T-cell (primary cell): ENCODE measurements at regions of chrX and their contacts with region 1.

Region 1: DNA sequence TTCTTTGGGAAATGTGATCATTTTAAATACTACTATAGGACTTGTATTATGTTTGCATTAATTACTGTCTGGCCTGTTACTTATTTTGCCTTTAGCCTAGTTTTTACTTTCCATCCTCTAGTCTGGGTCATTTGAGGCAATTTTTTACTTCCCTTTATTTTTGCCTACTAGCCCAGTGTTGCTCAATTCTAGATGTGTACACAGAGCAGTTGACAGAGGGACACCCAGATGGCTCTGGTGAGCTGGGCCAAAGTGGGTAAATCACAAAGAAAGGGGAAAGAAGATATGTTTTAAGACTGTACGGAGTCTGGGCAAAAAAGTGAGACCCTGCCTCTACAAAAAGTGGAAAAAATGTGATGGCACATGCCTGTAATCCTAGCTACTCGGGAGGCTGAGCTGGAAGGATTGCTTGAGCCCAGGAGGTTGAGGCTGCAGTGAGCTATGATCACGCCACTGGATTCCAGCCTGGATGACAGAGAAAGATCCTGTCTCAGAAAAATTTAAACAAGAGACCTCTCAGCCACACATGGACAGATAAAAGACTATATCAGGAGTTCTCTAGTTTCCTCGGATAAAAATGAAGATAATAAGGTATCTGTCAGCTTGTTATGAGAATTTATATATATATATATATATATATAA is 35.7 kb downstream of the APOO start:
- DNase-seq: no peak
- ATAC-seq: no peak
- H3K4me3 ChIP-seq: no peak overlapping the region
- H3K4me3 Mint-ChIP-seq: no peak overlapping the region
- H3K27ac ChIP-seq: no peak overlapping the region
- H3K27ac Mint-ChIP-seq: no peak overlapping the region
- H3K4me1 ChIP-seq: no peaks in the 10 kb centered on the region
- H3K4me1 Mint-ChIP-seq: no peaks in the 10 kb centered on the region
- H3K27me3 ChIP-seq: no peaks in the 10 kb centered on the region
- H3K27me3 Mint-ChIP-seq: no peaks in the 10 kb centered on the region

Region 2: DNA sequence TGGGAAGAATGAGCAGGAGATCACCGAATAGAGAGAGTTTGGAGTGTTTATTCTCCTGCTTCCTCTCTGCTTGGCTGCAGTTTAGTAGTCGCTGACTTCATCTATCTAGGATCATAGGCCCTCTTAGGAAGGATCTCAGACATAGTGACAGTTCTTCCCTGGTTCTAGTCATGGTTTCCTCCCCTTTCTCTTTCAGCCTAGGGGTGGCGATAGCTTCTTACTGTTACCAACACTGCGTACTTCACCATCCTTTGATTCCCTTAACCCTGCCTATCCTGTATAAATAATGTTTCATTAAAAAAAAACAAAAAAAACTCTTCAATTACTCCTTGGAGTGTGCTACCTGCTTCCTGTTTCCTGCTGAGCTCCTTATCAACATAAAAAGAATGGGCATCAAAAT is 768.5 kb before region 1 on chrX:
- CTCF ChIA-PET with region 1: no interaction called
- POLR2A ChIA-PET with region 1: no interaction called
- DNase-seq: no peak
- ATAC-seq: no peak
- H3K4me3 ChIP-seq: no peak overlapping the region
- H3K4me3 Mint-ChIP-seq: no peak overlapping the region
- H3K27ac ChIP-seq: no peak overlapping the region
- H3K27ac Mint-ChIP-seq: no peak overlapping the region
- H3K4me1 ChIP-seq: no peaks in the 10 kb centered on the region
- H3K4me1 Mint-ChIP-seq: no peaks in the 10 kb centered on the region
- H3K27me3 ChIP-seq: no peaks in the 10 kb centered on the region
- H3K27me3 Mint-ChIP-seq: no peaks in the 10 kb centered on the region

Region 3: DNA sequence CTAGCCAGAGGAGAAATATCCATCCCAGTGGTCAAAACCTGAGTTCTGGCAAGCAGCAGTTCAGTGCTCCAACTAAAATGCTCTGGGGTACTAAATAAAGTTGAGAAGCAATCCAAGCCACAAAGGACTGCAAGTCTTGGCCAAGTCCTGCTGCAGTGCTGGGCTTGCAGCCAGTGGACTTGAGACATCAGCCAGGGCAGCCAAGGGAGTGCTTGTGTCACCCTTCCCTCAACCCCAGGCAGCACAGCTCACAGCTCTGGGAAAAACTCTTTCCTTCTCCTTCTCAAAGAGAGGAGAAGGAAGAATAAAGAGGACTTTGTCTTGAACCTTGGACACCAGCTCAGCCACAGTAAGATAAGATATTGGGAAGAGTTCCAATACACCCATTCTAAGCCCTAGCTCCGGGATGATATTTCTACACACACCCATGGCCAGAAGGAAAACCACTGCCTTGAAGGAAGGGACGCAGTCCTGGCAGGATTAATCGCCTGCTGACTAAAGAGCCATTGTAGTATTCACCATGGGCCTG is 437.6 kb before region 1 on chrX:
- CTCF ChIA-PET with region 1: interaction called in 1 of 2 experiments, 12 read pairs
- POLR2A ChIA-PET with region 1: no interaction called
- DNase-seq: no peak
- ATAC-seq: no peak
- H3K4me3 ChIP-seq: no peak overlapping the region
- H3K4me3 Mint-ChIP-seq: no peak overlapping the region
- H3K27ac ChIP-seq: no peak overlapping the region
- H3K27ac Mint-ChIP-seq: no peak overlapping the region
- H3K4me1 ChIP-seq: no peaks in the 10 kb centered on the region
- H3K4me1 Mint-ChIP-seq: no peaks in the 10 kb centered on the region
- H3K27me3 ChIP-seq: no peaks in the 10 kb centered on the region
- H3K27me3 Mint-ChIP-seq: peaks cover 1 to 17% of the 10 kb centered on the region in 2 donors

Region 4: DNA sequence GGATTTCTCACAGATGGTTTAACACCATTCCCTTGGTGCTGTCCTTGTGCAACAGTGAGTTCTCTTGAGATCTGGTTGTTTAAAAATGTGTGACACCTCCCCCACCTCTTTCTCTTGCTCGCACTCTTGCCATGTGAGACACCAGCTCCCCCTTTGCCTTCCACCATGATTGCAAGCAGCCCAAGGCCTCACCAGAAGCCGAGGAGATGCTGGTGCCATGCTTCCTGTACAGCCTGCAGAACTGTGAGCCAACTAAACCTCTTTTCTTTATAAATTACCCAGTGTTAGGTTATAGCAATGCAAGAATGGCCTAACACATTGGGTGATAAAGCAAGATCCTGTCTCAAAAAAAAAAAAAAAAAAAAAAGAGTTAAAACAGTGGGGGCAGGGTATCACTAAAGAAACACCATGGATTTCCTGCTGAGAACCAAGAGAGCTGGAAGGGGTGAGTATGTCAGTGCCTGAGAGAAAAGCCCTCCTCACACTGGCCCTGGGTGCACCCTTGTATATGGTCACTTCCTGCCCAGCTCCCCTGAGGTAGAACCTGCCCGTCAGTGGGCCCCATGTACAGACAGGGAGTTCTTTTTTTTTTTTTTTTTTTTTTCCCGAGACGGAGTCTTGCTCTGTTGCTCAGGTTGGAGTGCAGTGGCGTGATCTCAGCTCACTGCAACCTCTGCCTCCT is 10.7 kb before region 1 on chrX:
- CTCF ChIA-PET with region 1: no interaction called
- POLR2A ChIA-PET with region 1: no interaction called
- DNase-seq: peak in 1 of 35 experiments; percentile 4
- ATAC-seq: no peak
- H3K4me3 ChIP-seq: no peak overlapping the region
- H3K4me3 Mint-ChIP-seq: no peak overlapping the region
- H3K27ac ChIP-seq: no peak overlapping the region
- H3K27ac Mint-ChIP-seq: peak overlapping the region in 1 of 2 donors; percentile 39
- H3K4me1 ChIP-seq: no peaks in the 10 kb centered on the region
- H3K4me1 Mint-ChIP-seq: peaks cover 0 to 20% (median 5%) of the 10 kb centered on the region in 3 donors
- H3K27me3 ChIP-seq: no peaks in the 10 kb centered on the region
- H3K27me3 Mint-ChIP-seq: no peaks in the 10 kb centered on the region